BJ (cell line): ENCODE measurements at regions of chr1 and their contacts with region 1.

Region 1: GRCh38 chr1:31955917-31956736 is 18.0 kb upstream of the PTP4A2 start:
- DNase-seq: peak; percentile 97
- H3K4me3 ChIP-seq: no peak overlapping the region
- H3K27me3 ChIP-seq: no peaks in the 10 kb centered on the region
- CTCF ChIP-seq: peak; percentile 62

Region 2: GRCh38 chr1:31938174-31938950 is 17.8 kb before region 1 on chr1 and contains the start of gene PTP4A2:
- CTCF ChIA-PET with region 1: interaction called, 30 read pairs
- POLR2A ChIA-PET with region 1: interaction called, 8 read pairs
- DNase-seq: peak; percentile 49
- H3K4me3 ChIP-seq: peak within 1 kb of the TSS; percentile 76
- H3K27me3 ChIP-seq: no peaks in the 10 kb centered on the region
- CTCF ChIP-seq: no peak
- polyA plus RNA-seq, gene PTP4A2: 239 and 455 TPM in 2 replicates

Region 3: DNA sequence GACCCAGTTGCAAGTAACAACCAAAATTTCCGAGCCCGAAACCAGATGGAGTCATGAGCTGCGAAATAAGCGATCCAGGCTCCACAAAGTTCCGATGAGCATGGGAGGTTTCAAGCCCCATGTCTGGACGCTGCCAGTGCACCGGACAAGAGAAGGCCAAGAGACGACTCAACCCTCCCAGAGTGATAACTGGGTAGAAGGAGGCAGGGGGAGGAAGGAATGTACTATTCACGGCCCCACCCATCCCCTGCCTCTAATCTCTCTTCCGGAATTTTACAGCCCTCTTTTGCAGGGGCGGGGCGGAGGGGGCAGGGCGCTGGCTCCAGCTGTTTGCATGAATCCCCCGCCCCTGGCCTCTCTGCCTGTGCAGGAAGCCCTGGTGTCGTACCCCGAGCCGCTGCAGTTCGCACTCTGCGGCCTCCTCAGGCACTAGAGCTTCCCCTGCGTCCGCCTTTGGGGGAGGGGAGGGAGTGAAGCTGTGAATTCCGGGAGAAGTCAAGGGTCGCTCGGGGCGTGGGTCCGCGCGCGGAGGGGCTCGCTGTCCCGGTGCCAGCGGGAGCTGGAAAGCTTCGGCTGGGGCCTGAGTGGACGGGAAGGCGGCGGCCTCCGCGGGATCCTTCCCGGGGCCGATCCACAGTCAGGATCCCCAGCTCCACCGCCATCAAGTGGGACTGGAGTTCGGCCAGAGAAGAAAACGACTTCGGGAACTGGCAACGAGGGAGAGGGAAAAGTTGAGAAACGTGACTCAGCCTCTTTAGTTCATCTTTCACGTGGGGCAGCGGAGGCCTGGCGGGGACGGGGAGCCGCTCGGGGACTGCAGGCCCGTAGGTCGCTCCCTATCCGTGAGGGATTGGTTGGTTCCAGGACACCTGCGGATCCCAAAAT is 11.7 kb before region 1 on chr1:
- CTCF ChIA-PET with region 1: interaction called, 30 read pairs
- POLR2A ChIA-PET with region 1: interaction called, 4 read pairs
- DNase-seq: no peak
- H3K4me3 ChIP-seq: peak overlapping the region; percentile 31
- H3K27me3 ChIP-seq: no peaks in the 10 kb centered on the region
- CTCF ChIP-seq: no peak